Heart right ventricle (tissue), 16 donors: ENCODE measurements at regions of chr5 and their contacts with region 1.

Region 1: GRCh38 chr5:40736103-40736875 is 19.5 kb downstream of the TTC33 start:
- DNase-seq: no peak
- ATAC-seq: peak in 5 of 8 donors; percentile 64 to 75 (median 71)
- H3K4me3 ChIP-seq: no peak overlapping the region
- H3K27ac ChIP-seq: no peak overlapping the region
- H3K4me1 ChIP-seq: peaks cover 6 to 37% (median 31%) of the 10 kb centered on the region in 9 donors
- H3K27me3 ChIP-seq: no peaks in the 10 kb centered on the region
- CTCF ChIP-seq: peak; percentile 61 to 88 (median 78)

Region 2: DNA sequence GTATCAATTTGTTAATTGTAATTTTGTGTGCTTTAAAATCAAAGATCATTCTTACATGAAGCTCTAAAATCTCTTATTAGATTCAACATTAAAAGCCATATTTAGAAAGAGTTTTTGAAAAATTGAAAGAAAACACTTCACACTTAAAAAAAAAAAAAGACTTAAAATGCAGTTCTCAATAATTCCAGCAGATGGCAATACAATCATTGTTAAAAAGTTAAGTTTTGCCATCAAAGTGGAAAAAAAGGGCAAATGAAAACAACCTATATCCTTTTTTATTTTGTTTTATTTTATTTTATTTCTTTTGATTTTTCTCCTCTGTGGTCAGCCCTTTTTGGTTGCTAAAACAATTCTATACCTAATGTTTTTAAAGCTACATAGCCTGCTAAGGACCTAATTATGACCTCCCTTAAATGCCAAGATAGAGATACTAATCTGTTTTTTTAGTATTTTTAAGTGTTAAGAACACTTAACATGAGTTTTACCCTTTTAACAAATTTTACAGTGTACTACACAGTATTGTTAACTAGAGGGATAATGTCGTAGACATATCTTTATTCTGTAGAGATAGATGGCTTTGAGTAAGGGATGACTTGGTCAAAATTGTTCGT is 1157.3 kb before region 1 on chr5:
- intact Hi-C with region 1: loop called in 4 of 10 experiments (anchors 5 to 10 kb)
- DNase-seq: no peak
- ATAC-seq: no peak
- H3K4me3 ChIP-seq: no peak overlapping the region
- H3K27ac ChIP-seq: no peak overlapping the region
- H3K4me1 ChIP-seq: peaks cover 0 to 13% (median 9%) of the 10 kb centered on the region in 9 donors
- H3K27me3 ChIP-seq: peaks cover 0 to 5% (median 0%) of the 10 kb centered on the region in 7 donors
- CTCF ChIP-seq: peak; percentile 59 to 82 (median 75)

Region 3: DNA sequence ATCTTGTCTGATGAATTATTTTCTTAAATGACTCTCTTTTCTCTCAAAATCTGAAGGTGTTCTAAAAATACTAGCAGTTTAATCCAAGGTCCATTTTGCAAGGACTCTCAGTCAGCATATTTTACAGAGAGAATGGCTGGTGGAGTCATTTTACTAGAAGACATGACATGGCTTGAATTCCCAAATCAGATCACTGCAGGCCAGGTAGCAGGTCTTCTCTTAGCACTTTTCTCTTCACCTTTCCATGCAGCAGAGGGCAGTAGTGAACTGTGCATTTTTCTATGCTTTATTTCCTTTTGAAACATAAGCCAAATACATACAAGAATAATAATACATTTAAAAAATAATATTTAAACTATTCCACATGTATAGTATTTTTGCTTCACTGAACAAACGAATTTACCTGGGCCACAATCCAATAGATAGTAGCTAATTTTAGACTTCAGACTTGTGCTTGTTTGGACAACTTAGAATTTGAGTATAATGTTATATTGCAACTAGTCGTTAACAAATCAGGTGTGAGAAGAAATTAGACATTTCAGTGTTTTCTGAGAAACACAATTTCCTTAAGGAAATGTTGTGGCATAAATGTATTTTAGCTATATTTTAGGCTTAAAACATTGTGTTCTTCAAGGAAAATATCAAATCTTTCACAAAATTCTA is 1022.1 kb before region 1 on chr5:
- intact Hi-C with region 1: loop called in 2 of 10 experiments (anchors 10 kb)
- DNase-seq: peak in 1 of 2 donors; percentile 7
- ATAC-seq: peak in 2 of 8 donors; percentile 55 to 59
- H3K4me3 ChIP-seq: no peak overlapping the region
- H3K27ac ChIP-seq: no peak overlapping the region
- H3K4me1 ChIP-seq: no peaks in the 10 kb centered on the region
- H3K27me3 ChIP-seq: no peaks in the 10 kb centered on the region
- CTCF ChIP-seq: peak; percentile 15 to 73 (median 61)

Region 4: DNA sequence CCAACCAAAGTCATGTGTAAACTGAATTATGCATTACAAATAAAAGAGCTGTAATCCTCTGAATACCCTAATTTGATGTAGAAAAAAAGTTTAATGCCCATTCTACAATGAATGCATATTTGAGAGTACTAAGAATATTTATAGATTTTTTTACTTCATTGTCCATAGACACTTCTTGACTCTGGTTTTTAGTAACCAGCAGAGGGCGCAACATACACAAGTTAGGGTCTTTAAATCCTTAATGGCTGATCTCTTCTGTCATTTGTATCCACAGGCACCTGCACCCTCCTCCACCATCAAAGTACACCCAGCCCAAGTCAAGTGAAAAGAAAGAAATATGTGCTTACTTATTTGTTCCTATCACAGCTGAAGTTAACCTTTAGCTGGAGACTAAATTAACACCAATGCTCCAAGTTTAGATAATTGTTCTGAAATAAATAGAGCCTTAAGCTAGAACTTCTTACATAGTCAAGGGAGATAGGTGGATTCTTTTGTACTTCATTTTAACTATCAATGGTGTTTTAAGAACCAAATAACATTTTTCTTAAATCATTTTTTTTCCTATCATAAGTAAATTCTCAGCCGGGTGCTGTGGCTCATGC is 787.3 kb before region 1 on chr5:
- intact Hi-C with region 1: loop called in 7 of 10 experiments (anchors 2 to 10 kb)
- DNase-seq: peak in 1 of 2 donors; percentile 64
- ATAC-seq: peak in 7 of 8 donors; percentile 66 to 79 (median 73)
- H3K4me3 ChIP-seq: no peak overlapping the region
- H3K27ac ChIP-seq: no peak overlapping the region
- H3K4me1 ChIP-seq: peaks cover 0 to 24% (median 0%) of the 10 kb centered on the region in 9 donors
- H3K27me3 ChIP-seq: no peaks in the 10 kb centered on the region
- CTCF ChIP-seq: peak; percentile 59 to 81 (median 74)

Region 5: DNA sequence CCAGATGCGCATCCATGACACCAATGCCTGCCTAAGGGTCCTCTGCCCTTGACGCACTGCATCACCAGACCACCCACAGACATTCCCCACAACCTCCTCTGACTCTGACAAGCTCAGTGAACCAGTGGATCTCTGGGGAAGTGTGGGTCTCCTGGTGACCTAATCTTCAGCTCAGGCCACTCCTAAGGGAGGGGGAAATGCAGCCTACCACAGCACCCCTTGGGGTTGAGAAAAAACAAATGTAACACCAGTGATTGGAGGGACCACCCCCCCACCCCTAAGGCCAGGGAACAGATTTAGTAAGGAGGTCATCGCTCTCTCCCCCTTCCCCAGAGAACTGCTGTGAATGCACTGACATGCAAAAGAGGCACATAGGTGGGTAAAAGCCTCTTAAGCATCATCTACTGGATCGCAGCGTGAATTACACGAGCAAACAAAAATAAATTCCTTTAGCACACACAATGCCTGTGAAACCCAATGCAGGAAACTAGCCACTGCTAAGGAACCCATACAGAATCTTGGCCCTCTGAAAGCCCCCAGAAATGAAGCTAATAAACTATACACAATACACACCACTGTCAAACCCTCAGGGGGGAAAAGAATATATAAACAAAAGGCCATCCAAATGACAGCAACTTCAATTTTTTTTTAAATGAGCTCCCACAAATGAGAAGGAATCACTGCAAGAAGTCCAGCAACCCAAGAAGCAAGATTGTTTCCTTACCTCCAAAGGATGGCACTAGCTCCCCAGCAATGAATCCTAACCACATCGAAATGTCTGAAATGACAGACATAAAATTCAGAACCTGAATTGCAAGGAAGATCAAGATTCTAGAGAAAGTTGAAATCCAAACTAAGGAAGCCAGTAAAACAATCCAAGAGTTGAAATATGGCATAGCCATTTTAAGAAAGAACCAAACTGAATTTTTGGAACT is 570.2 kb before region 1 on chr5:
- intact Hi-C with region 1: loop called in 3 of 10 experiments (anchors 5 to 10 kb)
- DNase-seq: no peak
- ATAC-seq: no peak
- H3K4me3 ChIP-seq: no peak overlapping the region
- H3K27ac ChIP-seq: no peak overlapping the region
- H3K4me1 ChIP-seq: no peaks in the 10 kb centered on the region
- H3K27me3 ChIP-seq: no peaks in the 10 kb centered on the region
- CTCF ChIP-seq: peak in 5 of 9 donors; percentile 21 to 51 (median 32)